CD14-positive monocyte (primary cell): ENCODE measurements at regions of chr20 and their contacts with region 1.

Region 1: GRCh38 chr20:46562373-46563169 is 12.1 kb upstream of the OCSTAMP start:
- DNase-seq: peak; percentile 46 to 72 (median 65)
- H3K4me3 ChIP-seq: peak overlapping the region in 1 of 3 experiments; percentile 64
- H3K4me3 Mint-ChIP-seq: no peak overlapping the region
- H3K27ac ChIP-seq: no peak overlapping the region
- H3K27ac Mint-ChIP-seq: no peak overlapping the region
- H3K4me1 ChIP-seq: peaks cover 3 to 8% of the 10 kb centered on the region in 2 donors
- H3K4me1 Mint-ChIP-seq: no peaks in the 10 kb centered on the region
- H3K27me3 ChIP-seq: no peaks in the 10 kb centered on the region
- H3K27me3 Mint-ChIP-seq: peaks cover 3 to 8% (median 8%) of the 10 kb centered on the region in 3 donors
- CTCF ChIP-seq: peak; percentile 92

Region 2: GRCh38 chr20:45415774-45416637 is 1146.6 kb before region 1 on chr20 and contains the start of gene PIGT:
- intact Hi-C with region 1: no loop called
- DNase-seq: peak; percentile 72 to 92 (median 86)
- H3K4me3 ChIP-seq: peak within 1 kb of the TSS; percentile 68 to 91 (median 71)
- H3K4me3 Mint-ChIP-seq: peak within 1 kb of the TSS; percentile 96
- H3K27ac ChIP-seq: peak within 1 kb of the TSS; percentile 45 to 85
- H3K27ac Mint-ChIP-seq: peak within 1 kb of the TSS; percentile 91 to 98 (median 96)
- H3K4me1 ChIP-seq: peaks cover 10 to 22% of the 10 kb centered on the region in 2 donors
- H3K4me1 Mint-ChIP-seq: peaks cover 14% of the 10 kb centered on the region
- H3K27me3 ChIP-seq: no peaks in the 10 kb centered on the region
- H3K27me3 Mint-ChIP-seq: peaks cover 0 to 2% (median 0%) of the 10 kb centered on the region in 3 donors
- CTCF ChIP-seq: no peak
- polyA plus RNA-seq, gene PIGT: 49.2 to 87.6 (median 59.7) TPM

Region 3: DNA sequence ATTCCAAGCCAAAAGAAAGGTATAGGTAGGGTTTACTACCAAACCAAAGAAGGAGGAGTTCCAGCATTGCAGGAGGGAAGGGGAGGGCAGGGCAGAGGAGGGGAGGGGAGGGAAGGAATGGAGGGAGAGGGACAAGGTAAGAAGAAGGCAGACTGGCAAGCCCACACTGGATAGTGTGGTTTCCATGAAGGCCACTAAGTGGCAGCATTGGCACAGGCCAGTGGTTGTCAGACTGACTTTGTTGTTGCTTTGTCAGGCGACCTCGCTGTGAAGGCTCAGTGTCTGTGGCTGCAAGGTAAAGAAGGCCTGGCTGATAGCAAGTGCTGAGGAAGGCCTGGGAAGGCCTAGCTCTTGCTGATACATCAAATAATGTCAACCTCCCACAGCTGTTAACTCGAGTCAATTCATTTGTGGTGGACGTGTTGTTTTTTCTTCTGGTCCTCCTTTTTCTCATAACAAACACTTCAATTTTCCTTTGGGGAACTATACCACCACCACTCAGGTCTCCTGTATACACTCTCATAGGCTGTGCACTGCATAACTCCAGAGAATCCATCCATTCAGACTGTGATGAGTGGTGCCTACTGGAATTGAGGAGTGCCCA is 41.5 kb before region 1 on chr20:
- intact Hi-C with region 1: loop called (anchors 5 kb)
- DNase-seq: peak; percentile 23 to 60 (median 54)
- H3K4me3 ChIP-seq: no peak overlapping the region
- H3K4me3 Mint-ChIP-seq: no peak overlapping the region
- H3K27ac ChIP-seq: no peak overlapping the region
- H3K27ac Mint-ChIP-seq: no peak overlapping the region
- H3K4me1 ChIP-seq: no peaks in the 10 kb centered on the region
- H3K4me1 Mint-ChIP-seq: peaks cover 2% of the 10 kb centered on the region
- H3K27me3 ChIP-seq: no peaks in the 10 kb centered on the region
- H3K27me3 Mint-ChIP-seq: peaks cover 2 to 8% (median 4%) of the 10 kb centered on the region in 3 donors
- CTCF ChIP-seq: peak; percentile 78

Region 4: DNA sequence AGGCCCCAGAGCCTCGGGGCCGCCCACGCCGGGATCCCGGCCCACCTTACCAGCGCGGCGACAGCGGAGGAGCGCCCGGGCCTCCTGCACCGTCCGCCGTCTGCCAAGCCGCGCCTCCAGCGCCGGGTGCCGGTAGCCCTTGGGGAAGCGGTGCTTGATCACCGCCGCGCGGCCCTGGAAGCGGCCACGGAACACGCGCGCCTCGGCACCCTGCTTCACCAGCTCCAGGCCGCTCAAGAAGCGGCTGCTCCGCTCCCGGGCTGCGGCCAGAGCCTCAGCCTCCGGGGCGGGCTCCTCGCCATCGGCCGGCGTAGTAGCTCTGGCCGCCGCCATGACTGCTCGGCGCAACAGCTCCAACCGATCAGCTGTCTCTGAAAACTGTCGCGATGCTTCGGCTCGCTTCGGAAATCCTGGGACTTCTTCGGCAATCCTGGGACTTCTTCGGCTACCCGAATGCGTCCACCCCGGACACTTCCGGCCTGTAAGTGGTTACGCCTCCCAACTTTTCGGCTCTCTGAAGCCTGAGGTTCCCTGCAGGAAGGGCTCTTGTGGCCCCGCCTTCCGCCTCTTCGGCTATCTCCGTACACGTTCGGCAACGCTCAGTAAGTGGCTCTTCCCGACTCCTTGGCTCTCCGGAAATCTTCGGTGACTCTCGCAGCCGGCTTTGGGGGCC is 126.6 kb after region 1 on chr20 and contains the start of gene TP53RK:
- intact Hi-C with region 1: loop called in 1 of 2 experiments (anchors 10 kb)
- DNase-seq: peak; percentile 96 to 98 (median 98)
- H3K4me3 ChIP-seq: peak within 1 kb of the TSS; percentile 48 to 80 (median 72)
- H3K4me3 Mint-ChIP-seq: peak within 1 kb of the TSS; percentile 90 to 93
- H3K27ac ChIP-seq: peak within 1 kb of the TSS; percentile 73 to 82
- H3K27ac Mint-ChIP-seq: peak within 1 kb of the TSS; percentile 88 to 95 (median 94)
- H3K4me1 ChIP-seq: peaks cover 19 to 30% of the 10 kb centered on the region in 2 donors
- H3K4me1 Mint-ChIP-seq: peaks cover 47% of the 10 kb centered on the region
- H3K27me3 ChIP-seq: no peaks in the 10 kb centered on the region
- H3K27me3 Mint-ChIP-seq: no peaks in the 10 kb centered on the region
- CTCF ChIP-seq: peak; percentile 29
- polyA plus RNA-seq, gene TP53RK: 1.4 to 10.9 (median 9.5) TPM